ENCODE measurements at regions of chr16 and their contacts with region 1.

Region 1: DNA sequence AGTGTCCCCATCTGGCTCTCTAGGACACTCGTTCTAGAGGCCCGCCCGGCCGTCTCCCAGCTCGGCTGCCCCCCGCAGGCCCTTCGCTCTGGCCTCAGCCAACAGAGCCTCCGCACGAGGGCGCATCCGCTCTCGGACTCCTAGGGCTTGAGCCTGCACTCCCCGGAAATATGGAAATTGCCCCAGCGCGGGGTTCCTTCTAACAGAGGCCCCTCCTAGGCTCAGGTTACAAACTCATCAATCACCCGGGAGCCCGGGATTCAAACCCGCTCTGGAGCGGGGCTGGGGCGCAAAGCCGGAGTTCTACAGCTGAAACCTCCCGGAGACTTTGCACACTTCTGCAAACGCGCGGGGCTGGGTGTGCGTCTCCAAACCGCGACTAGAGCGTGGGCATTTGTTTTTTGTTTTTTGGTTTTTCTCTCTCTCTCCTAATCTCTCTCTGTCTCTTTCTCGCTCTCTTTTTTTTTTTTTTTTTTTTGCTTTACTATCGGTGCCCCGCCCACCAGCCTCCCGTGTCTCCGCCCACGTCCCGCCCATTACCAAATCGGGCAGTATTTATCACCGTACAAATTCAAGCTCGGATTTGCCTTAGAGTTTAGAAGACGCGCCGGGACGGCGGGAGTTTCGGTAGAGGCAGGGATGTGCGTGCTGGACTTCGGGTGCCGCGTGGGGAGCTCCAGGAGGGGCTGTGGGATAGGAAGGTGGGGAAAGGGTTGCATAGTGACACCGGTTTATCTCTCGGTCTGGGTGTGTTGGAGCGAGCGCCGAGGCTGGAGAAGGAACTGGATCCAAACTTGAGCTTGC is 2.4 kb upstream of the FOXL1 start:
- DNase-seq: peak; percentile 97
- ATAC-seq: peak; percentile 95
- H3K4me3 ChIP-seq: peak overlapping the region; percentile 62 to 63
- H3K27ac ChIP-seq: peak overlapping the region; percentile 55
- H3K4me1 ChIP-seq: peaks cover 11 to 22% of the 10 kb centered on the region in 2 experiments; a peak in 3 of 4 replicates
- H3K27me3 ChIP-seq: no peaks in the 10 kb centered on the region
- CTCF ChIP-seq: peak; percentile 86 to 98 (median 88)
- POLR2A ChIP-seq: peak; percentile 60
- RAD21 ChIP-seq: peak; percentile 95

Region 2: GRCh38 chr16:86664533-86665318 is 88.8 kb after region 1 on chr16:
- CTCF ChIA-PET with region 1: interaction called, 6 read pairs
- POLR2A ChIA-PET with region 1: interaction called, 6 read pairs
- RAD21 ChIA-PET with region 1: no interaction called
- intact Hi-C with region 1: loop called (anchors 2 kb)
- DNase-seq: peak; percentile 96
- ATAC-seq: peak; percentile 86
- H3K4me3 ChIP-seq: peak overlapping the region; percentile 29 to 57
- H3K27ac ChIP-seq: peak overlapping the region; percentile 92
- H3K4me1 ChIP-seq: peaks cover 28 to 71% of the 10 kb centered on the region in 2 experiments
- H3K27me3 ChIP-seq: no peaks in the 10 kb centered on the region
- CTCF ChIP-seq: 0 out of 6 replicates have a peak, but pooled peaks of 2 of the 3 experiments have one; percentile 7 to 8
- POLR2A ChIP-seq: no peak
- RAD21 ChIP-seq: peak; percentile 49

Region 3: DNA sequence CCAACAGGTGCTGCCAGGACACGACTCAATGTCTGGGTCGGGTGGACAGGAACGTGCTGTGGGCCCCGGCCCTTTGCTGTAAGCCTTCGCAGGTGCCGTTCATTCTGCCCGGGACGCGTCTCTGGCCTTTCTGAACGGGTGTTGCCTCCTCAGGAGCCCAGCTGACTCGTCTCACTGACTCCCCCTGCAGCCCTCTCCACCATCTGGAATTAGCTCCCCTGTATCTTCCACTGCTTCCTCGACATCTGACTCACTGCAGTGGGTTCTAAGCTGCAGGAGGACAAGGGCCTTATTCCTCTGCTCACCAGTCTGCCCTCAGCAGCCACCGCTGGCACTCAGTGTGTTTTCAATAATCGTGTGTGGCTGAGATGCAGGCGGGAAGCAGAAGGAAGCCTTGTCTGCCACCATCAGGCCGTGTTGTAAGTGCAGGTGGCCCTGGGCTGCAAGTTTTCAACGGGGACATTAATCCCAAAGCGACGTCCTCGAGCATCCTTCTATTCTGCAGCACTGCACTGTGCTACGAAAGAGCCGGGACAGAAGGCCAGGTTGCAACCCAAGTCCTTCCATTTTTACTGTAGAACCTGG is 258.6 kb after region 1 on chr16:
- CTCF ChIA-PET with region 1: interaction called, 3 read pairs
- POLR2A ChIA-PET with region 1: interaction called, 6 read pairs
- RAD21 ChIA-PET with region 1: interaction called in 1 of 2 experiments, 4 read pairs
- intact Hi-C with region 1: loop called (anchors 1 kb)
- DNase-seq: no peak
- ATAC-seq: peak; percentile 86
- H3K4me3 ChIP-seq: no peak overlapping the region
- H3K27ac ChIP-seq: no peak overlapping the region
- H3K4me1 ChIP-seq: 0 out of 4 replicates have a peak, but pooled peaks cover 0 to 4% of the 10 kb centered on the region in 2 experiments
- H3K27me3 ChIP-seq: peaks cover 23% of the 10 kb centered on the region
- CTCF ChIP-seq: peak; percentile 48 to 81 (median 63)
- POLR2A ChIP-seq: no peak
- RAD21 ChIP-seq: peak; percentile 59

Region 4: DNA sequence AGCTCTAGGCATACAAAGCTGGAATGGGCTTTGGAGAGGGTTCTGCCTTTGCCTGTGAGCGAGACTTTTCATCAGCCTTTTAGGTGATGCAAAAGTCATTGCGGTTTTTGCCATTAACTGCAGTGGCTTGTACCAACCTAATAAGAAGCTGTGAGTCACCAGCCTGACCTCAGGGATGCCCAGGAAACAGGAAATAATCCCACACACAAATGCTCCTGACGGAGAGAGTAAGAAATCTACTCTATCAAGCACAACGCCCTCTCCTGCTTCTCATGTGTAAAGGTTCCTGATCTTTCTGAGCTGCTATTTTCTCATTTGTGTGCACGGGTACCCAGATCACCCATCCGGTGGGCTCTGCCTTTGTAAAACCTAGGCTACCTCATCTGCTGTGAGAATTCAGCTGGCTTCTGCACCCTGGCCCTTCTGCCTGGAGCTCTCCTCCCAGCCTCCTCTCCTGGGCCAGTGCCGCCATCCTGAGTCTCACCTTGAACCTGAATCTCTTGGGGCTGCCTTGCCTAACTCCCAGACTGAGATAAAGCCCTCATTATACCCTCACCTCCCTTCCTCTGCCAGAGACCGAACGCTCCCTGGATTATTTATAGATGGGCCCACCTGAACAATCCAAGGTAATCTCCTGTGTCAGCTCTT is 441.5 kb after region 1 on chr16:
- CTCF ChIA-PET with region 1: no interaction called
- POLR2A ChIA-PET with region 1: no interaction called
- RAD21 ChIA-PET with region 1: interaction called in 1 of 2 experiments, 3 read pairs
- intact Hi-C with region 1: loop called (anchors 5 kb)
- DNase-seq: peak; percentile 80
- ATAC-seq: peak; percentile 92
- H3K4me3 ChIP-seq: no peak overlapping the region
- H3K27ac ChIP-seq: no peak overlapping the region
- H3K4me1 ChIP-seq: peaks cover 3 to 10% of the 10 kb centered on the region in 2 experiments; a peak in 3 of 4 replicates
- H3K27me3 ChIP-seq: no peaks in the 10 kb centered on the region
- CTCF ChIP-seq: peak; percentile 39 to 58 (median 57)
- POLR2A ChIP-seq: no peak
- RAD21 ChIP-seq: peak; percentile 63

Region 5: DNA sequence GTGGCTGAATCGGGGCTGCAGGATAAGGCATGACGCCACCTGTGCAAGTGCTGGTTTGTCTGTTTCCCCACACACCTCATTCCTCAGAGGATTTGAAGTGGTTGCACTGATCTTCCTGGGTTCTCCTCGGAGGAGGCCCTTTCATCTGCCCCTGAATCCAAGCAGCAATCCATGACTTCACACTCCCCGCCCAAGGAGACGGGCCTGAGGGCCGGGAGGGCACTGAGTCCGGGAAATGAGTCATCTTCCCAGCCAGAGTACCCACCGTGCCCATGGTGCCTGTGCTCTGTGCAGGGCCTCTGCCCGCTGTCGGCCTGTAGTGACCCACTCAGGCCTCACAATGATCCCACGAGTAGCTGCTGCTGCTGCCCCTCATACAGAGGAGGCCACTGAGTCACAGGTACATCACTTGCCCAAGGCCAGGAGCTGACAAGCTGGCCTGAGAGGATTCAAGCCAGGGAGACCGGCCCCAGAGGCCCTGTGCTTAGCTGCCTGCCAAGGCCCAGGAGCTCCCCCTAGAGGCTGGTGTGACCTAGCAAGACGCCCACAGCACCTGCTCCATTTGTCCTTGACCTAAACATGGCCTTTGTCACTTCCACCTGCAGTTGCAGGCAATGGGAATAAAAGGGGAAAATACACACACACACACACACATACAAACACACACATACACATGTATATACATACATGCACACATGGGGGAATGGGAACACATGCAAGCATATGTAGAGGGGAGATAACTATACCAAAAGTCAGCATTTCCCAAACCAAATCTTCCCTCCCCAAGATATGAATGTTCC is 501.2 kb after region 1 on chr16:
- CTCF ChIA-PET with region 1: interaction called, 7 read pairs
- POLR2A ChIA-PET with region 1: no interaction called
- RAD21 ChIA-PET with region 1: no interaction called
- intact Hi-C with region 1: loop called (anchors 5 kb)
- DNase-seq: peak; percentile 94
- ATAC-seq: peak; percentile 97
- H3K4me3 ChIP-seq: peak overlapping the region; percentile 27 to 42
- H3K27ac ChIP-seq: peak overlapping the region; percentile 40
- H3K4me1 ChIP-seq: peaks cover 7 to 14% of the 10 kb centered on the region in 2 experiments; a peak in 3 of 4 replicates
- H3K27me3 ChIP-seq: no peaks in the 10 kb centered on the region
- CTCF ChIP-seq: peak; percentile 86 to 100 (median 99)
- POLR2A ChIP-seq: no peak
- RAD21 ChIP-seq: peak; percentile 91